Activated CD4-positive, alpha-beta memory T cell treated with anti-CD3 and anti-CD28 coated beads, Interleukin-2, amount 10 ng/mL, durations not matched to agents 7 days and 5 days (primary cell): ENCODE measurements at regions of chr6 and their contacts with region 1.

Region 1: DNA sequence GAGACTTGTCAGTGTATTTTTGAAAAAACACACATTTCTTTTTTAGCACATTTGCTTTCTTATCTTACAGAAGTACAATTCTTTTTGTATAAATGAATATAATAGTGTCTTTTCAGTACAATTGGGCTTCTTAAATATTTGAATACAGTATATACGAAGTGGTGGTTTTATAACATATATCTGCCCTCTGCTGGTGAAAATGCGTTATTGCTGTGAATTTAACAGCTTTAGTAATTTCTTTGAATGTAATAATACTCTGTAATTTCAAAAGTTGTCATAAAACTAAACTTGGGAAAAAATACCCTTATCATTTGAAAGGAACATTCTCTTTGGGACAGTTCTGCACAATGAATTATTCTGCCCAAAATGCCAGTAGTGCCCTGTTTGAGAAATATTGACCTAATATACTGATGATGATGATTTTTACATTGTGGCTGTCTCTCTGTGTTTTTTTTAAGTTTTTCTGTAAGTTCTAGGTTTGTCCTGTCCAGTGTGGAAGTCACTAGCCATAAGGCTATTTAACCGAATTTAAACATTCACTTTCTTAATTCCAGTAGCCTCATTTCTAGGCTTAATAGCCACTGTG is 19.0 kb downstream of the SMAP1 start:
- DNase-seq: no peak
- H3K4me3 Mint-ChIP-seq: no peak overlapping the region
- H3K27ac Mint-ChIP-seq: no peak overlapping the region
- H3K4me1 Mint-ChIP-seq: peaks cover 31% of the 10 kb centered on the region
- H3K27me3 Mint-ChIP-seq: no peaks in the 10 kb centered on the region

Region 2: DNA sequence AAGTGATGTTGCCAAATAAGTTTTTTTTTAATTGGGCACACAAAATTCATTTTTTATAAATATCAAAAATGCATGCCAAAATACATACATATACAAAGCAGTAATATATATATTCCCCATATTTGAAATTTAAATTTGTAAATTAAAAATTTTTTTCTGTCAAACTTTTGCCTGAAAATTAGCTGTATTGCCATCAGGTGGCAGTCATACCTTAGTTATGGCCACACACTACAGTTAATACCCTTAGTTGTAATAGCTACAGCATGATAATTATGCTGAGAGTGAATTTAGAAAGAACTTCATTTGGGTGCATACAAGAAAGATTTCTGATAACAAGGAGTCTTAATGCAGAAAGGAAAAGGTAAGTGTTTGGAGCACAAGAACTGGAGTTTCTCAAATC is 166.1 kb before region 1 on chr6:
- CTCF ChIA-PET with region 1: interaction called, 40 read pairs
- POLR2A ChIA-PET with region 1: no interaction called
- DNase-seq: no peak
- H3K4me3 Mint-ChIP-seq: no peak overlapping the region
- H3K27ac Mint-ChIP-seq: no peak overlapping the region
- H3K4me1 Mint-ChIP-seq: peaks cover 4% of the 10 kb centered on the region
- H3K27me3 Mint-ChIP-seq: no peaks in the 10 kb centered on the region

Region 3: GRCh38 chr6:70547313-70547712 is 139.3 kb before region 1 on chr6:
- CTCF ChIA-PET with region 1: interaction called, 57 read pairs
- POLR2A ChIA-PET with region 1: no interaction called
- DNase-seq: no peak
- H3K4me3 Mint-ChIP-seq: no peak overlapping the region
- H3K27ac Mint-ChIP-seq: no peak overlapping the region
- H3K4me1 Mint-ChIP-seq: no peaks in the 10 kb centered on the region
- H3K27me3 Mint-ChIP-seq: no peaks in the 10 kb centered on the region

Region 4: GRCh38 chr6:70657706-70658105 is 28.9 kb before region 1 on chr6:
- CTCF ChIA-PET with region 1: no interaction called
- POLR2A ChIA-PET with region 1: no interaction called
- DNase-seq: no peak
- H3K4me3 Mint-ChIP-seq: no peak overlapping the region
- H3K27ac Mint-ChIP-seq: no peak overlapping the region
- H3K4me1 Mint-ChIP-seq: peaks cover under 1% of the 10 kb centered on the region
- H3K27me3 Mint-ChIP-seq: peaks cover 4% of the 10 kb centered on the region

Region 5: DNA sequence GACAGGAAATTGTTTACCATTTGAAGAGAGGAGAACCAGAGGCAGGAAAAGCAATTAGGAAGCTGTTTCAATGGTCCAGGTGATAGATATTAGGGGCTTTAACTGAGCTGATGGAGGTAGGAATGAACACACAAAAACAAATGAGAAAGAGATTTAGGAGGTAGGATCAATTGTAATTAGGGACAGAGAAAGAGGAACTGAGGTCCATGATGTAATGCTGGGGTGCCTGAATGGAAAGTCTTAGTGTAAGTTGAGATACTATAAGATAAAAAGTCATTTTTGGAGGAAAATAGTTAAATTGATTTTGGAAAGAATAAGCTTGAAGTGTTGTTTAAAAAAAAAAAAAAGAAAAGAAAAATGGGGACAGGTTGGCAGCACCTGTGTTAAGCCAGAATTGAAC is 328.8 kb after region 1 on chr6:
- CTCF ChIA-PET with region 1: no interaction called
- POLR2A ChIA-PET with region 1: no interaction called
- DNase-seq: no peak
- H3K4me3 Mint-ChIP-seq: no peak overlapping the region
- H3K27ac Mint-ChIP-seq: no peak overlapping the region
- H3K4me1 Mint-ChIP-seq: no peaks in the 10 kb centered on the region
- H3K27me3 Mint-ChIP-seq: peaks cover 2% of the 10 kb centered on the region